Esophagus muscularis mucosa (tissue), 4 donors: ENCODE measurements at regions of chr13 and their contacts with region 1.

Region 1: GRCh38 chr13:44577236-44578066 is 1.3 kb upstream of the TSC22D1 start:
- DNase-seq: peak; percentile 98
- H3K4me3 ChIP-seq: peak overlapping the region; percentile 88 to 98 (median 95)
- H3K27ac ChIP-seq: peak overlapping the region; percentile 98 to 100 (median 98)
- H3K4me1 ChIP-seq: peaks cover 36 to 43% (median 42%) of the 10 kb centered on the region in 4 donors
- H3K27me3 ChIP-seq: no peaks in the 10 kb centered on the region
- CTCF ChIP-seq: no peak
- EP300 ChIP-seq: no peak
- POLR2A ChIP-seq: no peak

Region 2: DNA sequence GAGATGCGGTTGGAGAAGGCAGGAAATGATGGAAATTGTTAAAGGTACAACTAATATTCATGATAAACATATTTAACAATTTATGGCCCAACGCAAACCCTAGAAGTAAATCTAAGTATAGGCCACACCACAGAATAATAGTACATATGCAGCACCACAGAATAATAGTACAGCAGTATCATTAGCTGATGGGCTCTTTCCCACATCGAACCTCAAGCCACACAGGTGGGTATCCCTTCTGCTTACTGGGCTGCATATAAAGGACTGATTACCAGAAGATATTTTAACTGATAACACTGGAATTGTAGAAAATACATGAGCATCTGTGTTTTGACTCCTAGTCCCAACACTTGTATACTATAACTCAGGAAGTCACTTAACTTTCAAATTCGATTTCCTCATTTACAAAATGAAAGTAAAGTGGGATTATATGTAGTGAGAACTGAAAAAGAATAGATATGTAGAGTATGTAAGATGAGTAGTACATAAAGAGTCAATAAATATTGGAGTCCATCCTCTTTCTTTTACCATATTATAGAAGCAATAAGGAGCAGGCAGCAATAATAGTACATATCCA is 92.8 kb before region 1 on chr13:
- intact Hi-C with region 1: loop called (anchors 5 kb)
- DNase-seq: no peak
- H3K4me3 ChIP-seq: peak overlapping the region in 1 of 4 donors; percentile 19
- H3K27ac ChIP-seq: no peak overlapping the region
- H3K4me1 ChIP-seq: peaks cover 5 to 18% (median 15%) of the 10 kb centered on the region in 4 donors
- H3K27me3 ChIP-seq: no peaks in the 10 kb centered on the region
- CTCF ChIP-seq: no peak
- EP300 ChIP-seq: no peak
- POLR2A ChIP-seq: no peak

Region 3: DNA sequence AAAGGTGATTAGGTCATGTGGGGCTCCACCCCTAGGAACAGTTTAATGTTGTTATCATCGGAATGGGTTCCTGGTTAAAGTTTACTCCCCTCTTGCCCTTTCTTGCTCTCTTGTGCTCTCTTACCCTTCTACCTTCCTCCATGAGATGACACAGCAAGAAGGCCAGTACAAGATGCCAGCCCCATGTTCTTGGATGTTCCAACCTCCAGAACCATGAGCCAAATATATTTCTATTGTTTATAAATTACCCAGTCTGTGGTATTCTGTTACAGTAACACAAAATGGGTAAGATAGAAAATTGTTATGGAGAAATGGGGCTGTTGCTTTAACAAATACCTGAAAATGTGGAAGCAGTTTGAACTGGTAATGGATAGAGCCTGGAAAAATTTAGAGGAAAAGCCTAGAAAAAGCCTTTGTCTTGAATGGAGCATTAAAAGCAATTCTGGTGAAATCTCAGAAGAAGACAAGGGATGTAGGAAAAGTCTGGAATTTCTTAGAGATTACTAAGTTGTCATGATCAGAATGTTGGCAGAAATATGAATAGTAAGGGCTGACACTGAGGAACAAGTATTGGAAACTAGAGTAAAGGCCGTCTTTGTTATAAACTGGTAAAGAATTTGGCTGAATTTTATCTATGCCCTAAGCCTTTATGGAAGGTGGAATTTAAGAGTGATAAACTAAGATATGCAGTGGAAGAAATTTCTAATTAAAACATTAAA is 52.2 kb after region 1 on chr13:
- intact Hi-C with region 1: loop called (anchors 5 kb)
- DNase-seq: no peak
- H3K4me3 ChIP-seq: no peak overlapping the region
- H3K27ac ChIP-seq: peak overlapping the region; percentile 34 to 75 (median 54)
- H3K4me1 ChIP-seq: peaks cover 0 to 22% (median 18%) of the 10 kb centered on the region in 4 donors
- H3K27me3 ChIP-seq: no peaks in the 10 kb centered on the region
- CTCF ChIP-seq: no peak
- EP300 ChIP-seq: no peak
- POLR2A ChIP-seq: no peak

Region 4: GRCh38 chr13:44643256-44643655 is 65.8 kb after region 1 on chr13:
- intact Hi-C with region 1: no loop called
- DNase-seq: no peak
- H3K4me3 ChIP-seq: no peak overlapping the region
- H3K27ac ChIP-seq: no peak overlapping the region
- H3K4me1 ChIP-seq: no peaks in the 10 kb centered on the region
- H3K27me3 ChIP-seq: no peaks in the 10 kb centered on the region
- CTCF ChIP-seq: no peak
- EP300 ChIP-seq: no peak
- POLR2A ChIP-seq: no peak

Region 5: DNA sequence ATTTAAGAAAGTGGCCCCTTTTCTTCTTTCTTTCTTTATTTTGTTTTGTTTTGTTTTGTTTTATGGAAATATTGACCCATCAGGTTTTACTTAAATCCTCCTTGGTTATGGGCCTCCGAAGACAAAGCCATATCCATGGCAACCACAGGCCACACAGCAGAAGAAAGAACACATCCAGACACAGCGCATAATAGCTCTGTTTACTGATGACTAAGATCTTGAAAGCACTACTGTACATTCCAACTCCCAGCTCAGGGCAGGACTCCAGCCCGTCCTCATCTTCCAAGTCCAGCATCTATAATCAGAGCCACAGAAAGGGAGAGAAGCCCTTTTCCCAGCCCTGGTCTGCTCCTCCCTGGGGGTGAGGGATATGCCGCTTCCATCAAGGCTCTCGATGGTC is 327.5 kb after region 1 on chr13:
- intact Hi-C with region 1: loop called (anchors 10 kb)
- DNase-seq: no peak
- H3K4me3 ChIP-seq: no peak overlapping the region
- H3K27ac ChIP-seq: peak overlapping the region; percentile 89 to 92 (median 90)
- H3K4me1 ChIP-seq: peaks cover 37 to 67% (median 61%) of the 10 kb centered on the region in 4 donors
- H3K27me3 ChIP-seq: no peaks in the 10 kb centered on the region
- CTCF ChIP-seq: no peak
- EP300 ChIP-seq: no peak
- POLR2A ChIP-seq: no peak

Region 6: GRCh38 chr13:44929692-44930091 is 352.2 kb after region 1 on chr13:
- intact Hi-C with region 1: loop called (anchors 5 kb)
- DNase-seq: no peak
- H3K4me3 ChIP-seq: no peak overlapping the region
- H3K27ac ChIP-seq: no peak overlapping the region
- H3K4me1 ChIP-seq: peaks cover 29 to 34% (median 31%) of the 10 kb centered on the region in 4 donors
- H3K27me3 ChIP-seq: no peaks in the 10 kb centered on the region
- CTCF ChIP-seq: no peak
- EP300 ChIP-seq: no peak
- POLR2A ChIP-seq: no peak

Region 7: DNA sequence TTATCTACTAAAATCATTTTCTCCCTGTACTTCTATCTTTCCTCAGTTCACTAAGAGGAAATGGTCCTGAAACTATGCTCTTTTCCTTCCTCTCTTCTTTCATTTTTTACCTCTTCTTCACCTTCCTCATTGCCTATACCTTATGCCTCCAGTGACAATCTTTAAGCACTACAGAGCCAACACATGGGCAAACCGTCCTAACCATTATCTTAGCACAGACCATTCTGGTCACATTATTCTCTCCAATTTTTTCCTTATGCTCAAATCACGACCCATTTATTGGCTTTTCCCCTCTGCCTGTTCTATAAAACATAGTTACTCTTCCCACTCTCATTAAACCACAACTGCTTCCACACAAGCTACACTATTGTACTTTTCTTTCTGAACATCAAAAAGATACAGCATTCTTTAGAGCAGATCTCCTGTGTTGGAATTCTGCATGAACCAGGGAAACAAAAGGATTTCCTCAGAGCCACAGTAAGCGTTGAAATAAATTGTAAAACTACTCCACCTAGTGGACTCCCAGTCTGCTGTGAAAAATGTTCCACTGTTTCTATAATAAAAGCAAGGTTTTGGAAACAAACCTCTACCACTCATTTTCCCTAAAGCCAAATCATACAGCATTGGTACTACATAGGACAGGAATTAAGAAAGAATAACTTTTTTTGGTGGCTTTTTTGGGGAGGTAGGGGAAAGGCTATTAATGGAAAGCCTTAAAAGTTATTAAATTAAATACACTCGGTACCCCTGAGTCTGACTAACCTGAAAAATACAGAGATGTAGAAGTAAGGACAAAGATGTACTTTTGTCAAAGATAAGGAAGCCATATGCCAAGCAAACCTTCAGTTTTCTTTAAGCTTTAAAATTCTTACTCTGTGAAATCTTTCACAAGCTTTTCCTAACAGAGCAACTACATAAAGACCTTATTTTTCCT is 392.4 kb after region 1 on chr13:
- intact Hi-C with region 1: loop called (anchors 5 kb)
- DNase-seq: no peak
- H3K4me3 ChIP-seq: no peak overlapping the region
- H3K27ac ChIP-seq: peak overlapping the region; percentile 68 to 80 (median 78)
- H3K4me1 ChIP-seq: peaks cover 16 to 45% (median 30%) of the 10 kb centered on the region in 4 donors
- H3K27me3 ChIP-seq: no peaks in the 10 kb centered on the region
- CTCF ChIP-seq: peak; percentile 82 to 90 (median 85)
- EP300 ChIP-seq: no peak
- POLR2A ChIP-seq: no peak